A673 (cell line): ENCODE measurements at regions of chr7 and their contacts with region 1.

Region 1: GRCh38 chr7:27329911-27330310 is 87.3 kb downstream of the EVX1 start:
- DNase-seq: no peak
- H3K4me3 ChIP-seq: no peak overlapping the region
- H3K27ac ChIP-seq: no peak overlapping the region
- H3K4me1 ChIP-seq: no peaks in the 10 kb centered on the region
- H3K27me3 ChIP-seq: peaks cover 8% of the 10 kb centered on the region
- CTCF ChIP-seq: no peak; the same call in 1 of the 2 replicates

Region 2: DNA sequence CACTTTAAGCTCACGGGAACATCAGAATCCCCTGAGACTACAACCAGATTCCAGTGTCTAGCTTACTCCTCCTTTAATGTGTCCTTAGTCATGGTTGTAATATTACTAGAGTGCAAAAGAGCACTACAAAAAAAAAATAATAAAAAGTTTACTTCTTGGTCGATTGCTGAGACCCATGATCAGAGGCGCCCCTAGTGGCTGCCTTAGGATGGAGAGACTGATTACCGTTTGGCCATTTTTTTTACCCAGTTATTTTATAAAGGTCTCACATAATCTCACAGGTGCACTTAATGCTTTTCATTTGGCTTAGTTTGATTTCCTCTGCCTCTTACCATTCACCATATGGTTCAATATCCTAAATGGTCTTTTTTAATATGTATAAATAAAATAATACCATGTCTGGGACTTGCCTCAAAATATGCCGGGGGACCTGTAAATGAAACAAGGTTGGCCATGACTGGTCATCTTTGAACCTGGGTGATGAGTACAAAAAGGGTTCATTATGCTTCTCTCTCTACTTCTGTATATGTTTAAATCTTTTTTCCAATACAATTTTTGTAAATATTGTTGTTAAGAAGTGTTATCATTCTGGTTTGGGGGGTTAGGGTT is 1509.4 kb before region 1 on chr7:
- CTCF ChIA-PET with region 1: no interaction called
- POLR2A ChIA-PET with region 1: no interaction called
- intact Hi-C with region 1: loop called (anchors 10 kb)
- DNase-seq: peak; percentile 21
- H3K4me3 ChIP-seq: no peak overlapping the region
- H3K27ac ChIP-seq: no peak overlapping the region
- H3K4me1 ChIP-seq: no peaks in the 10 kb centered on the region
- H3K27me3 ChIP-seq: peaks cover 30% of the 10 kb centered on the region
- CTCF ChIP-seq: peak; percentile 79